ENCODE measurements at regions of chr11 and their contacts with region 1.

Region 1: GRCh38 chr11:207208-207862 is at the starts of genes BET1L and RIC8A:
- DNase-seq: peak; percentile 96 to 99
- ATAC-seq: peak; percentile 79 to 95 (median 83)
- H3K4me3 ChIP-seq: peak within 1 kb of the TSS; percentile 76
- H3K4me3 Mint-ChIP-seq: peak within 1 kb of the TSS; percentile 97
- H3K27ac ChIP-seq: peak within 1 kb of the TSS; percentile 94
- H3K27ac Mint-ChIP-seq: peak within 1 kb of the TSS; percentile 99
- H3K4me1 ChIP-seq: peaks cover 50% of the 10 kb centered on the region
- H3K4me1 Mint-ChIP-seq: peaks cover 40 to 55% of the 10 kb centered on the region in 2 donors
- H3K27me3 ChIP-seq: no peaks in the 10 kb centered on the region
- H3K27me3 Mint-ChIP-seq: no peaks in the 10 kb centered on the region
- CTCF ChIP-seq: no peak
- total RNA-seq, gene BET1L: 32.4 to 44.1 (median 35.8) TPM
- total RNA-seq, gene RIC8A: 102 to 153 (median 106) TPM

Region 2: DNA sequence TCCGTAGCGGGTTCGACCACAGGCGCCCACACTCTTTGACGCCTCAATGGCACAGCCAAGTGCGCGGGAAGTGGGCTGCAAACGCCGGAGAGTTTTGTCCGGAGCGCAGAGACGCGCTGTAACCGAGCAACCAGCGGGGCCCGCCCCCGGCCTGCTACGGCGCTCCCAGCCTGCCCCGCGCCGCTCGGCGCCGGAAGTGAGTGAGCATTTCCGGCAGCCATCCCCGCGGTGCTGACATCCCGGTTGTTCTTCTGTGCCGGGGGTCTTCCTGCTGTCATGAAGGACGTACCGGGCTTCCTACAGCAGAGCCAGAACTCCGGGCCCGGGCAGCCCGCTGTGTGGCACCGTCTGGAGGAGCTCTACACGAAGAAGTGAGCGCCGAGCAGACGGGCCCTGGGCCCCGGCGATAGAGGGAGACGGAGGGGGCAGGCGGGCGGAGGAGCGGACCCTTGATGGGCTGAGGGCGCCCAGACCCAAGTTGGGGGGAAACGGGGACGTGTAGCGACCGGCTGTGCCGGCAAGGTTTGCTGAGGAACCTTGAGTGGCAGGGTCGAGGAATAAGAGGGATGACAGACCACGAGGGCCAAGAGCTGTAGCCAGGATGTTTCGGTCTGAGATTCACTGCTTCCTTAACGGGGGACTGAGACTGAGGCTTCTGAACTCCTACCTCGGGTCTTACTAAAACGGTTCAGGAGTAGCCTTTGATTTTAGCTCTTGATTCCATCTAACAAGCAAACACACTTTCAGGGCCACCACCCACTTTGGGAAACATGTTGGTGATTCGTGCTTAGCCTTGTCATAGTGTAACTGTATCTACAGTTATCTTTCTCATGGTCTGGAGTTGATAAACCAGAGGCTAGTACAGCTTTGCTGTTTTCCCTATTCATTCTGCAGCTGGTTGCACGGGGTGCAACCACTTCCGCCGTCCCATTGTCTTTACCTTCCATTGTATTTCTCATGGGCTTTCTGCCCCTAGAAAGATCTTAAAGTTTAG is 29.7 kb after region 1 on chr11 and contains the start of gene PSMD13:
- intact Hi-C with region 1: loop called (anchors 1 kb)
- DNase-seq: peak; percentile 87 to 94
- ATAC-seq: peak; percentile 76 to 90 (median 79)
- H3K4me3 ChIP-seq: peak within 1 kb of the TSS; percentile 99
- H3K4me3 Mint-ChIP-seq: peak within 1 kb of the TSS; percentile 97
- H3K27ac ChIP-seq: peak within 1 kb of the TSS; percentile 100
- H3K27ac Mint-ChIP-seq: peak within 1 kb of the TSS; percentile 98
- H3K4me1 ChIP-seq: peaks cover 20% of the 10 kb centered on the region
- H3K4me1 Mint-ChIP-seq: peaks cover 38 to 42% of the 10 kb centered on the region in 2 donors
- H3K27me3 ChIP-seq: no peaks in the 10 kb centered on the region
- H3K27me3 Mint-ChIP-seq: no peaks in the 10 kb centered on the region
- CTCF ChIP-seq: no peak
- total RNA-seq, gene PSMD13: 94.6 to 111 (median 104) TPM

Region 3: DNA sequence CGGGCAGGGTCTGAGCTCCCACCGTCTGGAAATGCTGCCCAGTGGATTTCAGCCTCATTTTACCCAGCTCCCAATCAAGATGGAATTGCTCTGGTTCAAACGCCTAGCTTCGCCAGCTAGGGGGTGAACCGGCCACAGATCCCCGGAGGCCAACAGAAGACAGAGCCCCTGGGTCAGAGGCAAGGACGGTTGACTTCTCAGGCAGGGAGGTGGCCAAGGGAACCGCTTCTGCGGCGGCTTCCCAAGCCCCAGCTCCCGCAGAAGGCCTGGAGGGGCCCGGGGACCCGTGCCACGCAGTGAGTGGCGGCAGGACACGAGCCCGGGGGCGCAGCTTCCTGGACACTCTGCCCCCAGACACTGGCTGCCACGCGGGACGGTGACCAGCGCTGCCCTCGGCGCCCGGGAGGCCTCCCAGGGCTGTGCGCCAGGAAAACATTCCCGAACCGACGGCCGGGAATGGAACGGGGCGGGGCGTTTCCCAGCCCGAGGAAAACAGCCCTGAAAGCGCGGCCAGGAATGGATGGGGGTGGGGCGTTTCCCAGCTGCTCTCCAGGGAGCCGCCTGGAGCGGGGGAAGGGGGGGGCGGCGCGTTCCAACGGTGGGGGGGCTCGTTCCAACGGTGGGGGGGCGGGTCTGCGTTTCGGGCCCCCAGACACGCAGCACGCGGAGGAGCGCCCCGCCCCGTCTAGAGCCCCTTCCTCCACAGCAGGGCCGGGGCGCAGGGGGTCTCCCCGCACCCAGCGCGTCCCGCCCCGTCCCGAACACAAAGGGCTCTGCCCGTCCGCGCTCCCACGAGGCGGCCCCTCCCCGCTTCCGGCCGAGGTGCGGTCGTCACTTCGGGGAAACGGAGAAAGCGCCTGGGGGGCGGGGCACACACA is 148.5 kb after region 1 on chr11:
- intact Hi-C with region 1: loop called (anchors 5 kb)
- DNase-seq: peak; percentile 64 to 93
- ATAC-seq: peak; percentile 19 to 61 (median 58)
- H3K4me3 ChIP-seq: peak overlapping the region; percentile 11
- H3K4me3 Mint-ChIP-seq: peak overlapping the region; percentile 57
- H3K27ac ChIP-seq: peak overlapping the region; percentile 83
- H3K27ac Mint-ChIP-seq: peak overlapping the region; percentile 78
- H3K4me1 ChIP-seq: peaks cover 74% of the 10 kb centered on the region
- H3K4me1 Mint-ChIP-seq: peaks cover 41 to 57% of the 10 kb centered on the region in 2 donors
- H3K27me3 ChIP-seq: no peaks in the 10 kb centered on the region
- H3K27me3 Mint-ChIP-seq: no peaks in the 10 kb centered on the region
- CTCF ChIP-seq: no peak

Region 4: DNA sequence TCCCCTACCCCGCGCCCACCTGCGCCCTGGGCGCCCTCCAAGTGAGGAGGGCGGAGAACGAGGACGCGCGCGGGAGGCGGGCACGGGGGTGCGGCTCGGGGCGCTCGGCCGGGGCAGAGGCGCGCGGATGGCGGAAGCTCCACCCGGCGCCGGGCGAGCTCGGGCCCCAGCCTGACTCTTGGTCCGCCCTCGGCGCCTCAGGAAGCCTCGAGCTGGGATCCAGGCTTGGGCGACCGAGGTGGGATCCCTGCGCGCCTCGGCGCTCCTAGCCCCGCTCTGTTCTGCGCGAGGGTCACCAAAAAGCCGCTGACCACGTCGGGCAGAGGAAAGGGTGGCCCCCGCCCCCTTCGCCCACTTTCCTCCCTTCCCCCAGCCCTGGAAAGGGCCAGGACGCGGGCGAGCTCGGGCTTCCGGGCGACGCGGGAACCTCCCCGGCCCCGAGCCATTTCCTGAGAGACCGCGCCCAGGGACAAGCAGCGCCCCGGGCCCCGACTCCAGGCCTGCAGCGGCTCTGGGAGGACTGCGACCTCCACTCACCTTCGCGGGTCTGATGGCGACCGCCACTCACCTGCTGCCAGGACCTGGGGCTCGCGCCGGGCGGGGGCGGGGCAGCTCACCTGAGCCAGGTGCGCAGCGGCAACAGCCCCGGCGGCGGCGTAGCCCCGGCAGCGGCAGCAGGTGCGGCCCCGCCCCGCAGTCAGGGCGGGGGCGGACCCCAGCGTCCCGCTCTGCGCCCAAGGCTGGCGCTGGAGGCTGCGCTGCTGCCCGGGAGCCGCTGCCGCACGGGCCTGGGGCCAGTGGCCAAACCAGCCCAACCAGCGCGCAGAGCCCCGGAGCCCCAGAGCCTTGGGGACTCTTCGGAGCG is 209.7 kb after region 1 on chr11:
- intact Hi-C with region 1: loop called (anchors 5 kb)
- DNase-seq: peak; percentile 57 to 65
- ATAC-seq: peak; percentile 47 to 66 (median 56)
- H3K4me3 ChIP-seq: peak overlapping the region; percentile 70
- H3K4me3 Mint-ChIP-seq: peak overlapping the region; percentile 96
- H3K27ac ChIP-seq: peak overlapping the region; percentile 81
- H3K27ac Mint-ChIP-seq: peak overlapping the region in 1 of 2 donors; percentile 84
- H3K4me1 ChIP-seq: peaks cover 44% of the 10 kb centered on the region
- H3K4me1 Mint-ChIP-seq: peaks cover 17 to 49% of the 10 kb centered on the region in 2 donors
- H3K27me3 ChIP-seq: no peaks in the 10 kb centered on the region
- H3K27me3 Mint-ChIP-seq: no peaks in the 10 kb centered on the region
- CTCF ChIP-seq: no peak

Region 5: DNA sequence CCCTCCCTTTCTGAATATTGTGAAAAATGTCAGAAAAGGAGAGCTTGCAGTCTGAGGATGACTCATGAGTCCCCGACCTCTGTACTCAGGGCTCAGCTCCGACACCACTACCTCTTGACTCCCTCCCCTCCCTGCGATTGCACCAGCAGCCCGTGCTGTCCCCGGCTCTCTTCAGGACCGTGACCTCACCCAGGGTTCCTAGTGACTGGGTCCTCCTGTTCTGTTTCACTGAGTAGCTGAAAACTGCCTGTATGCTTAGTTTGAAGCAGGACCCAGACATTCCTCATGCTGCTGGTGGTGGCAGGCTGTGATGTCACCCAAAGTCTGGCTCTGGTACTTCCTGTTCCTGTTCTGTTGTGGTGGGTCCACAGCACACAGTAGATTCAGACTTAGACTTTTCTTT is 380.6 kb after region 1 on chr11:
- intact Hi-C with region 1: no loop called
- DNase-seq: peak in 1 of 2 donors; percentile 87
- ATAC-seq: peak; percentile 83 to 90 (median 83)
- H3K4me3 ChIP-seq: no peak overlapping the region
- H3K4me3 Mint-ChIP-seq: peak overlapping the region; percentile 47
- H3K27ac ChIP-seq: peak overlapping the region; percentile 56
- H3K27ac Mint-ChIP-seq: peak overlapping the region; percentile 86 to 89
- H3K4me1 ChIP-seq: peaks cover 14% of the 10 kb centered on the region
- H3K4me1 Mint-ChIP-seq: peaks cover 16 to 29% of the 10 kb centered on the region in 2 donors
- H3K27me3 ChIP-seq: no peaks in the 10 kb centered on the region
- H3K27me3 Mint-ChIP-seq: no peaks in the 10 kb centered on the region
- CTCF ChIP-seq: no peak

Region 6: GRCh38 chr11:694563-695287 is 487.4 kb after region 1 on chr11 and contains the start of gene DEAF1:
- intact Hi-C with region 1: no loop called
- DNase-seq: peak; percentile 99
- ATAC-seq: peak; percentile 80 to 93 (median 82)
- H3K4me3 ChIP-seq: peak within 1 kb of the TSS; percentile 98
- H3K4me3 Mint-ChIP-seq: peak within 1 kb of the TSS; percentile 88
- H3K27ac ChIP-seq: peak within 1 kb of the TSS; percentile 100
- H3K27ac Mint-ChIP-seq: peak within 1 kb of the TSS; percentile 90 to 95
- H3K4me1 ChIP-seq: peaks cover 51% of the 10 kb centered on the region
- H3K4me1 Mint-ChIP-seq: peaks cover 18 to 41% of the 10 kb centered on the region in 2 donors
- H3K27me3 ChIP-seq: no peaks in the 10 kb centered on the region
- H3K27me3 Mint-ChIP-seq: no peaks in the 10 kb centered on the region
- CTCF ChIP-seq: no peak
- total RNA-seq, gene DEAF1: 25.9 to 26.9 (median 26.8) TPM

Measured in natural killer cell (primary cell).